HEK293 (cell line): ENCODE measurements at regions of chr5 and their contacts with region 1.

Region 1: DNA sequence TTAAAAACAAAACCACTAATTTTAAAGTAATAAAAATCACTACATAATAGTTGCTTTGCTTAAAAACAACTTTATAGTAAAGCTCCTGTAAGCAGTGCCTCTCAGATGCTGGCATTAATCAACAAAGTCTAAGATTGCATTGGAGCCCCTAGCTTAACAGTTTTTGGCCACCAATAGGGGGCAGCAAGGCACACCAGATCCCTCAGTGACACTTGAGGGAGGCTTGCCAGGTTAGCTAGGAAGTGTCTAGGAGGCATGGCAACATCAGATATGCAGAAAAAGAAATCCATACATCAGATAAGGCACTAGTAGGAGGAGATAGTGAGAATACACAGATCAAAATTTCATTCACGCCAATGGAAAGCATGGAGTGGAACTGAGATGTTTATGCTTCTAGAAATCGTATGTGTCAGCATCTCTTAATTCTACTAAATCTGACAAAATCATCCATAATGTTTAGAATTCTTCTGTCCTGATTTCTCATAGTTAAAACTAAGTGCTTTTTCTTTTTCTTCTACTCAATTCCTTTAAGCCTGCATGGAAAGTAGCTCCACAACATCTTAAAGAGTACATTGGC is 73.6 kb upstream of the PAM start:
- H3K4me3 ChIP-seq: no peak overlapping the region
- H3K27ac ChIP-seq: no peak overlapping the region
- H3K4me1 ChIP-seq: no peaks in the 10 kb centered on the region
- CTCF ChIP-seq: peak; percentile 72; the same call in 1 of the 2 replicates

Region 2: DNA sequence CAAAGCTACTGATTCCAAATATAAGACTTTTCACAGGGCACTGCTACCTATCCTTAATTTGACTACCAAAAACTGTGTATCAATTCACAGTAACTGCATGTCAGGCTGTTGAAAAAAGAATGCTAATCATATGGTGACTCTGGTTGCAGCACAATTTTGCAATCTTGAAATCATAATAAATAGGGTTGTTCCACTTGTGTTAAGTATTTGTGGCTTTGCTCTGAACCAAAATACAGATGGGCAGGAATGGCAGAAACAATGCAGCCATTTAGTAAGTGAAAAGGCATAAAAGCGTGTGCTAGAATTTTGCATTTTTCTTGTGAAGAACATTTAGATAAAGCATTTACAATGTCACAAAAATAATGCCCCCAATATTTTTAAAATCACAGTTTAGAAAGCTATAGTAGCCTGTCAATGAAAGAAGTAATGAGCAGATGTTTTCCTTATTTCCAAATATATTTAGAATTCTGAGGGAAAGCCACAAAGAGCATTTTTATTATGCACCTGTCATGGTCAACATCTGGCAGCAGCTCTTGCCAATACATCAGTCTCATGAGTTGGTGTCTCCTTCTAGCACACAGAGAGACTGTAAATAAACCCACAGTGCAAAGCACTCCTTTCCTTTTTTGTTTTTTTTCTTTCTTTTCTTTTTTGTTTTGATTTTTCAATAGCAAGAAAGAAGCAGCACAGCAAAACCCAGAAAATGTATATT is 18.8 kb after region 1 on chr5:
- CTCF ChIA-PET with region 1: interaction called, 14 read pairs
- POLR2A ChIA-PET with region 1: no interaction called
- H3K4me3 ChIP-seq: no peak overlapping the region
- H3K27ac ChIP-seq: no peak overlapping the region
- H3K4me1 ChIP-seq: peaks cover 5% of the 10 kb centered on the region; the same call in 1 of the 2 replicates
- CTCF ChIP-seq: no peak

Region 3: DNA sequence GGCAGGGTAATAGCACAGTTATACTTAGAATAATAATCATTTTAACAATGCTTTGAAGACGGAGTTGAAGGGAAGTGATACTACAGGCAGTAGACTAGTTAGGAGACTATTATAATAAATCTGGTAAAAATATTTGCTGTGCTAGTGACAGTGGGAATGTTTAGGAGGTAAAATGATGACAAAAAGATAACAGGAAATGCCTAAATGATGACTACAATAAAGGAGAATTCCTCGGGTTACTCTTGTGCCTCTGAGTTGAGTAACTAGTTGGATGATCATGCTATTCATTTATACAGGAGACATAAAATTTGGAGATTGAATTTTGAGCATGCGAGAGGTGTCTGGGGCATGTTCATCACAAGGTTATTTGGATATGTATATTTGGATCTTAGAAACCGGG is 41.4 kb after region 1 on chr5:
- CTCF ChIA-PET with region 1: interaction called, 10 read pairs
- POLR2A ChIA-PET with region 1: no interaction called
- H3K4me3 ChIP-seq: no peak overlapping the region
- H3K27ac ChIP-seq: no peak overlapping the region
- H3K4me1 ChIP-seq: no peaks in the 10 kb centered on the region
- CTCF ChIP-seq: no peak

Region 4: GRCh38 chr5:102778478-102778877 is 97.0 kb after region 1 on chr5:
- CTCF ChIA-PET with region 1: interaction called, 20 read pairs
- POLR2A ChIA-PET with region 1: no interaction called
- H3K4me3 ChIP-seq: no peak overlapping the region
- H3K27ac ChIP-seq: no peak overlapping the region
- H3K4me1 ChIP-seq: 0 out of 2 replicates have a peak, but pooled peaks cover 5% of the 10 kb centered on the region
- CTCF ChIP-seq: no peak

Region 5: DNA sequence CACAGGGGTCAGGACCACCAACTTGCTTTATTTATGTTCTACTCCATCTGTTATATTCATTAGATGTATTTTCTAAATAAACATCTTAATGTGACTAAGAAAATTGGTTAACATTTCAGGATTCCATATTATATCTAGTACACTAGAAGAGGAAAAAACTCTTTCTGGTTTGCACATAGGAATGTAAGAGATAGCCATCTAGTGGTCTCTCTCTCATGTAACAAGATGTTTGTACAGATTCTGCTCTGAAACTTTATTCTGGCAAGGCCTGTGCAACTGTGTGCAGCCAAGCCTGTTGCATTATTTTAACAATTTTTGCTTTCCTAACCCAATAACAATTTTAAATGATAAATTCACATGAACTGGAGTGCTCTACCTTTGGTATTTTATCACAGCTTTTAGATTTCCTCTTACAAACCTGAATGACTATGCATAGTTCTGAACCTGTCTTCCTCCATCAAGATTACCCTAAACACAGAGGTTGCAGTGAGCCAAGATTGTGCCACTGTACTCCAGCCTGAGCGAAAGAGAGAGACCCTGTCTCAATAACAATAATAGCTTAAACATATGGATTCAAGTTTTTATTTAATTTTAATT is 290.3 kb after region 1 on chr5:
- CTCF ChIA-PET with region 1: interaction called, 14 read pairs
- POLR2A ChIA-PET with region 1: no interaction called
- H3K4me3 ChIP-seq: no peak overlapping the region
- H3K27ac ChIP-seq: no peak overlapping the region
- H3K4me1 ChIP-seq: no peaks in the 10 kb centered on the region
- CTCF ChIP-seq: 0 out of 2 replicates have a peak, but pooled peaks have one; percentile 25

Region 6: GRCh38 chr5:103041071-103041676 is 359.7 kb after region 1 on chr5:
- CTCF ChIA-PET with region 1: interaction called, 15 read pairs
- POLR2A ChIA-PET with region 1: no interaction called
- H3K4me3 ChIP-seq: no peak overlapping the region
- H3K27ac ChIP-seq: no peak overlapping the region
- H3K4me1 ChIP-seq: no peaks in the 10 kb centered on the region
- CTCF ChIP-seq: 0 out of 2 replicates have a peak, but pooled peaks have one; percentile 39

Region 7: GRCh38 chr5:103139264-103139865 is 457.9 kb after region 1 on chr5:
- CTCF ChIA-PET with region 1: interaction called, 12 read pairs
- POLR2A ChIA-PET with region 1: no interaction called
- H3K4me3 ChIP-seq: no peak overlapping the region
- H3K27ac ChIP-seq: no peak overlapping the region
- H3K4me1 ChIP-seq: no peaks in the 10 kb centered on the region
- CTCF ChIP-seq: peak; percentile 53; the same call in 1 of the 2 replicates